HEK293 (cell line): ENCODE measurements at regions of chr11 and their contacts with region 1.

Region 1: DNA sequence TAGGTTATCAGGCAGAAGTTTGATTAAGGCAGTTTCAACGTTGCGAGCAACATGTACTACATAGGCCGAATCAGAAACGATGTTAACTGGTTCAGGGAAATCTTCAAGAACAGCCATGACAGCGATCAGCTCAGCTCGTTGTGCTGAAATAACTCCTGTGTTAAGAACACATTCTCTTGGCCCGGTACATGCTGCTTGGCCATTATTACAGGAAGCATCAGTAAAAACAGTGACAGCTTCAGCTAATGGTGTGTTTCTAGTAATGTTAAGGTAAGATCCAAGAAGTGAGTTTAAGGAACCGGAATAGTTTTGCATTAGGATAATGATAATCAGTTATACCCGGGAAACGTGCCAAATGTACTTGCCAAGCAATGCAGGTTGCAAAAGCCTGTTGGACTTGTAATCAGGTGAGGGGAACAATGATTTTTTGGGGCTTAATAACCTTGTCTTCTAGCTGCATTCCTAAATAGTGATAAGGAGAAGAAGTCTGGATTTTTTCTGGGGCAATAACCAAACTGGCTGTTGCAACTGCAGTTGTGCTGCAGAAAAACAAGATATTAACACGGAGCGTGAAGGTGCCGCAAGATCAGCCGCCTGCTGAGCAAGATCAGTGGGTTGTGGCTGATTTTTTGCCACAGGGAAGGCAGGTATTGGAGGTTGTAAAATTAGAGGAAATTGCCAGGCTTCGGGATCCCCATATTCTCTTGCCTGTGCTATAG is 14.3 kb downstream of the OR52K1 start:
- H3K4me3 ChIP-seq: no peak overlapping the region
- H3K27ac ChIP-seq: no peak overlapping the region
- H3K4me1 ChIP-seq: no peaks in the 10 kb centered on the region
- CTCF ChIP-seq: no peak

Region 2: GRCh38 chr11:4181782-4182721 is 314.7 kb before region 1 on chr11:
- CTCF ChIA-PET with region 1: interaction called, 87 read pairs
- POLR2A ChIA-PET with region 1: no interaction called
- H3K4me3 ChIP-seq: no peak overlapping the region
- H3K27ac ChIP-seq: no peak overlapping the region
- H3K4me1 ChIP-seq: no peaks in the 10 kb centered on the region
- CTCF ChIP-seq: peak; percentile 83

Region 3: GRCh38 chr11:4455419-4455818 is 41.3 kb before region 1 on chr11:
- CTCF ChIA-PET with region 1: no interaction called
- POLR2A ChIA-PET with region 1: no interaction called
- H3K4me3 ChIP-seq: no peak overlapping the region
- H3K27ac ChIP-seq: no peak overlapping the region
- H3K4me1 ChIP-seq: no peaks in the 10 kb centered on the region
- CTCF ChIP-seq: no peak

Region 4: DNA sequence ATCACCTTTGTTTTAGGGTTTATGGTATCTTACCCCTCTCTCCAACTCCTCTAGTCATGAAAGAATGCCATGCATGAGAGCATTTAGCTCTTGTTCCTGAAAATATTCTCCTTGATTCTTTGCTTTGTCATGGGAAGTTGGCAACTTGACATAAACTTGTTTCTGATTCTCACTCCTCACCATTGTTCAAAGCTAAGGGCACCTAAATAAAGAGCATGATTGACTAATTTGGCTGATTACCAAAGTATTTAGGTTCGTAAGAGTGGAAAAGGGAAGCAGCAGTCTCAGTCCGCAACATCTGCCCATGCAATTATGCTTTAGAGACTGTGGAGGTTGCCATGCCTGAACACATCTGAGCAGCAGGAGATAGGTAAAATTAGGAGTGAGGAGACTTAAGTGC is 12.2 kb after region 1 on chr11:
- CTCF ChIA-PET with region 1: interaction called, 11 read pairs
- POLR2A ChIA-PET with region 1: no interaction called
- H3K4me3 ChIP-seq: no peak overlapping the region
- H3K27ac ChIP-seq: no peak overlapping the region
- H3K4me1 ChIP-seq: no peaks in the 10 kb centered on the region
- CTCF ChIP-seq: no peak